ENCODE measurements at regions of chr4 and their contacts with region 1.

Region 1: DNA sequence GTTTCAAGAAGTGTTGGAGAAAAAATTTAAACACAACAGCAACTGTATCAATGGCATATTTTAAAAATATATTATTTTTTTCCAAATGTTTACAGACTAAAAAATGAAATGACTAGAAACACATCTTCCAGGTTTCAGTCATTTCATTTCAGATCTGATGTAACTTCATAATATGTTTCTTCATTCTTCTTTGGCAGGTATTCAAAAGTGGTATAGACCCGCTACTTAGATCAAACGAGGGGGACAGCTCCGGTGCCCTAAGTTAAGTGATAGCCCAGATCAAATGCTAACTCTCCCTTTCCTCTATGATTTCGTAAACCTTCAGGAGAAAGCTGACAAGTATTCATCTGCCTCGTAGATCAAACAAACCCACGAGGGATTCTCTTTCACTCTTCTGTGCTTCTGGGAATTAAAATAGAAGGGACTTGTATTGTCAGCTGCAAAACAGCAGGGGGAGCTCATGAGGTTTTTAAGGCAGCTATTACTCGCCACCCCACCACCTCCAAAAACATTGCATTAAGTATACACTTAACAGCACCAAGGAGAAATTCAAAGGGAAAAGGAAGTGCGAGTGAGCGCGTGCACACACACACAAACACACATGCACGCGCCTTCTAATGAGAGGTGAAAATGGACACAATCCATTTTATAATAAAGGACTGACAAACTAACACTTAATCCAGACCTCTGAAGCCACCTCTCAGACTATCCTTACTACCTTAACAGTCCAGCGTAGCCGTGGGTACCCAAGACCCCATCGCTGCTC is 21.4 kb downstream of the HELT start:
- DNase-seq: peak; percentile 77
- H3K4me3 ChIP-seq: no peak overlapping the region
- H3K27ac ChIP-seq: no peak overlapping the region
- H3K4me1 ChIP-seq: peaks cover 10% of the 10 kb centered on the region
- H3K27me3 ChIP-seq: no peaks in the 10 kb centered on the region
- CTCF ChIP-seq: peak; percentile 83

Region 2: DNA sequence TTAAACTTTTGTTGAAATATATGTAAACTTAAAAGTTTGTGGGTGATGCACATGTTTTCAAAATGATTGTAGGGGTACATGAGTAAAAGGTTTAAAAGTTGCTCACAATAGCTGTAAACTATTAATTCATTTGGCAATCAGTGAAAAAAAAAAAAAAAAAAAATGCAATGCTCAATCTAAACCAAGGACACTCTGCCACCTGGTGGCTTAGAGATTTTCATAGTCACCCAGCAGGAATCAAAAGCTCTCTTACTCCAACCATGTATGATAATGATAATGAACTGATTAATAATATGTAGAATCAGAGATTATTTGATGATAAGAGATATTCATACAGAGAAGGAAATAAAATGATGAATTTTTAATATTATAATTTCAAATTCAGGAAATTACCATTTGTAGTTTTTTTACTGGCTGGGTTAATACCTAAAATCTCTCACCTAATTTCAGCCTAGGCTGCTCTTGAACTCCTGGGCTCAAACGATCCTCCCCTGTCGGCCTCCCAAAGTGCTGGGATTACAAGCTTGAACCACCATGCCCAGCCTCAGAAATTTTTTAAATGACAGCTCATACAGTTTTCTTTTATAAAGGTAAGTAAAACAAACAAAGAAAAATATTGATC is 56.5 kb after region 1 on chr4:
- CTCF ChIA-PET with region 1: interaction called, 24 read pairs
- POLR2A ChIA-PET with region 1: interaction called, 6 read pairs
- intact Hi-C with region 1: loop called (anchors 1 kb)
- DNase-seq: peak; percentile 58
- H3K4me3 ChIP-seq: no peak overlapping the region
- H3K27ac ChIP-seq: no peak overlapping the region
- H3K4me1 ChIP-seq: no peaks in the 10 kb centered on the region
- H3K27me3 ChIP-seq: no peaks in the 10 kb centered on the region
- CTCF ChIP-seq: peak; percentile 68

Region 3: DNA sequence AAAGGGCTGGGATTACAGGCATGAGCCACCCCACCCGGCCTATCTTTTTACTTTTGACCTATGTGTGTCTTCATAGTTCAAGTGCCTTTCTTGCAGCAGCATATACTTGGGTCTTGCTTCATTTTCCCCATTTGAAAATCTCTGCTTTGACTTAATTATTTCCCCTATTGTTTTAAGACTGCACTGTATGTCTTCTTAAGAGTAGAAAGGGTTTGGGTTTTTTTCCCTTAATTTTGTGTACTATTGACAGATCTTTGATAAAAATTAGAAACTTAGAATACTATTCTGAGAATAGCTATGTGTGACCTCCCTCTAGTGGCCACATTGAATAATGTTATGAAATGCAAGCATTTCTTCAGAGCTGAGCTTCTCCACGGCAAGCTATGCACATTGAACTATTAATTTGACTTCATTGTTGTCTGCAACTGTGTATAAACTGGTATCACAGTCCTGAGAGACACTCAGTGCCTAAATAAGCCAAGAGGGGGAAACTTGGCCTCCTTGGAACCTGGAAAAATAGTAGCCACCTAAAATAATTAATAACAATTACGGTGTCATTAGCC is 94.7 kb after region 1 on chr4:
- CTCF ChIA-PET with region 1: interaction called, 10 read pairs
- POLR2A ChIA-PET with region 1: interaction called, 3 read pairs
- intact Hi-C with region 1: loop called (anchors 1 kb)
- DNase-seq: peak; percentile 63
- H3K4me3 ChIP-seq: no peak overlapping the region
- H3K27ac ChIP-seq: no peak overlapping the region
- H3K4me1 ChIP-seq: no peaks in the 10 kb centered on the region
- H3K27me3 ChIP-seq: no peaks in the 10 kb centered on the region
- CTCF ChIP-seq: peak; percentile 84

Region 4: GRCh38 chr4:185183619-185184281 is 144.1 kb after region 1 on chr4:
- CTCF ChIA-PET with region 1: interaction called, 5 read pairs
- POLR2A ChIA-PET with region 1: no interaction called
- intact Hi-C with region 1: loop called (anchors 5 kb)
- DNase-seq: peak; percentile 91
- H3K4me3 ChIP-seq: no peak overlapping the region
- H3K27ac ChIP-seq: no peak overlapping the region
- H3K4me1 ChIP-seq: peaks cover 17% of the 10 kb centered on the region
- H3K27me3 ChIP-seq: no peaks in the 10 kb centered on the region
- CTCF ChIP-seq: peak; percentile 91

Region 5: GRCh38 chr4:185304944-185305690 is 265.4 kb after region 1 on chr4:
- CTCF ChIA-PET with region 1: no interaction called
- POLR2A ChIA-PET with region 1: no interaction called
- intact Hi-C with region 1: loop called (anchors 1 kb)
- DNase-seq: peak; percentile 58
- H3K4me3 ChIP-seq: no peak overlapping the region
- H3K27ac ChIP-seq: no peak overlapping the region
- H3K4me1 ChIP-seq: no peaks in the 10 kb centered on the region
- H3K27me3 ChIP-seq: no peaks in the 10 kb centered on the region
- CTCF ChIP-seq: peak; percentile 64

Measured in A673 (cell line).